ENCODE measurements at regions of chr6 and their contacts with region 1.

Region 1: GRCh38 chr6:1070085-1070521 is 241.8 kb upstream of the FOXQ1 start:
- DNase-seq: no peak
- H3K4me3 ChIP-seq: no peak overlapping the region
- H3K27me3 ChIP-seq: 0 out of 2 replicates have a peak, but pooled peaks cover 2% of the 10 kb centered on the region
- CTCF ChIP-seq: no peak

Region 2: GRCh38 chr6:1082285-1082935 is 12.3 kb after region 1 on chr6:
- CTCF ChIA-PET with region 1: interaction called, 3 read pairs
- POLR2A ChIA-PET with region 1: interaction called, 13 read pairs
- DNase-seq: no peak
- H3K4me3 ChIP-seq: no peak overlapping the region
- H3K27me3 ChIP-seq: peaks cover 2% of the 10 kb centered on the region; the same call in 1 of the 2 replicates
- CTCF ChIP-seq: no peak